ENCODE measurements at regions of chr12 and their contacts with region 1.

Region 1: GRCh38 chr12:26832822-26833742 is at the start of gene ITPR2:
- DNase-seq: peak; percentile 88 to 98
- H3K4me3 ChIP-seq: peak within 1 kb of the TSS; percentile 88 to 94
- H3K27ac ChIP-seq: peak within 1 kb of the TSS; percentile 90 to 97
- H3K4me1 ChIP-seq: peaks cover 0 to 8% of the 10 kb centered on the region in 2 donors
- H3K27me3 ChIP-seq: no peaks in the 10 kb centered on the region
- CTCF ChIP-seq: peak in 2 of 3 experiments; percentile 21 to 27
- total RNA-seq, gene ITPR2: 12.5 TPM

Region 2: DNA sequence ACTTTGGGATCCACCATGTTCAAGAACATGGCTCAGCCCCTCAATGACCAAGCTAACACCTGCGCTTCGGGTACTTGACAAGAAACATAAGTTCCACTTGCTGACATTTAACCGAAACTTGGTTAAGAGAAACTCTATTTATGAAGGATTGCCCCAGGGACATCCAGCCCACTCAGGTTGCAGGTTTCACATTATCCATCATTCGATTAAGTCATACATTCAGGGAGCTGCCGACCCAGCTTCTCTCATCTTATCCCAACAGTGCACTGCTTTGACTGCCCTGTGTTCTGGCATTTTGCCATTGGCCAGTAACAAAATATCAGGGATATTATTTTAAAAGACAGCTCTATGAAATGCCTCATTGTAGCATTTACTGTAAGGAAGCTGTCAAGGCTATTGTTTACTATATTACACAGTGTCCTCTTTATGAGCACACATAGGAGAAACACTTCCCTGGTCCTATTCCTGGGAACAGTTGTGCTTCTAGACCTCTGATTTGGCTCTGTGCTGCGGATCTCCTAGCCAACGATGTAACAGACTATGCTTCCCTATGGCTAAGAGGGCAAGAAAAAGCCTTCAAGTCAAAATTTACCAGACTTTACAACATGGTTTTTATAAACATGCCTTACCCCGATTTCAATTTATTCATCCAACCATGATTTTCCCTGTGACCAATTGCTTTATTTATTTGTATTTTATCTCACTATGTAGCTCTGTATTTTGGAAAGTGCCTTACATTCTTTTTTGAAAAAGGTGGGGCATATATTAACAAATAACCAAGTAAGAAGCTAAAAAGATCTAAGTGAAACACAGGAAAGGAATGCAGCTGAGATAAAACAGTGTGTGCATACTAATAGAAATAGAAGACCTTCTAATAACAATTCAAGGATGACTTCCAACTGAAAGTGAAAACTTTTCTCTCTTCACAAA is 109.4 kb before region 1 on chr12:
- intact Hi-C with region 1: loop called (anchors 5 kb)
- DNase-seq: no peak
- H3K4me3 ChIP-seq: no peak overlapping the region
- H3K27ac ChIP-seq: peak overlapping the region; percentile 49 to 63
- H3K4me1 ChIP-seq: peaks cover 3 to 16% of the 10 kb centered on the region in 2 donors
- H3K27me3 ChIP-seq: no peaks in the 10 kb centered on the region
- CTCF ChIP-seq: no peak

Region 3: DNA sequence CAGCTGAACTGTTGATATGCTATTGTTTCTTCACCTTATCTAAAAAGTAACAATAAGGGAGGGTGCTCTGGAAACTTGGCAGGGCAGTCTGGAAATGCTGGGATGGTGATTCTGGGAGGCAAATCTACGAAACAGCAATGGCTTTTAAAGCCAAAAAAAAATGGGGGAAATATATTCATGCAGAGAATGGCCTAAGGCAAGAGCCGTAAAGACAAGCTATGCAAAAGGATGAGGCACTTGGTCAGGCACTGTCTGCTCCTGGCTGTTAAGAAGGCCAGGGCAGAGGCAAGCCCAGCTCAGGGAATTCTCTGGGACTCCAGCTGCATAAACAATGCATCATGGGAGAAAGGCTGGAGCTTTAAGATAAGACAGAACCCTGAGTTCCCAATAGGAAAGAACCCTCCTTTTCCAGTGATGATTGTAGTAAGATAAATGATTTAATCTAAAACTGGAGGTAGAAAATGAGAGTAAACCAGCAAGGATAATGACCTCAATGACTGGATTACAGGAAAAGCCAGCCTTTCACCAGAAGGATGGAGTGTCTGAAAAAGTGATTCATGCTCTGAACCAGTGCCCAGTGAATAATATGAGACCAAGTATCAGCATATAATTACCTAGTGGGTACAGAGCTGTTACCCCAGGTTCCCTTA is 46.1 kb before region 1 on chr12:
- intact Hi-C with region 1: loop called (anchors 5 kb)
- DNase-seq: no peak
- H3K4me3 ChIP-seq: no peak overlapping the region
- H3K27ac ChIP-seq: peak overlapping the region; percentile 57 to 64
- H3K4me1 ChIP-seq: peaks cover 0 to 13% of the 10 kb centered on the region in 2 donors
- H3K27me3 ChIP-seq: no peaks in the 10 kb centered on the region
- CTCF ChIP-seq: no peak

Region 4: GRCh38 chr12:26810330-26810729 is 22.8 kb before region 1 on chr12:
- intact Hi-C with region 1: loop called (anchors 1 kb)
- DNase-seq: peak in 1 of 2 donors; percentile 88
- H3K4me3 ChIP-seq: peak overlapping the region in 1 of 2 donors; percentile 37
- H3K27ac ChIP-seq: peak overlapping the region; percentile 69 to 74
- H3K4me1 ChIP-seq: peaks cover 0 to 13% of the 10 kb centered on the region in 2 donors
- H3K27me3 ChIP-seq: no peaks in the 10 kb centered on the region
- CTCF ChIP-seq: no peak

Region 5: DNA sequence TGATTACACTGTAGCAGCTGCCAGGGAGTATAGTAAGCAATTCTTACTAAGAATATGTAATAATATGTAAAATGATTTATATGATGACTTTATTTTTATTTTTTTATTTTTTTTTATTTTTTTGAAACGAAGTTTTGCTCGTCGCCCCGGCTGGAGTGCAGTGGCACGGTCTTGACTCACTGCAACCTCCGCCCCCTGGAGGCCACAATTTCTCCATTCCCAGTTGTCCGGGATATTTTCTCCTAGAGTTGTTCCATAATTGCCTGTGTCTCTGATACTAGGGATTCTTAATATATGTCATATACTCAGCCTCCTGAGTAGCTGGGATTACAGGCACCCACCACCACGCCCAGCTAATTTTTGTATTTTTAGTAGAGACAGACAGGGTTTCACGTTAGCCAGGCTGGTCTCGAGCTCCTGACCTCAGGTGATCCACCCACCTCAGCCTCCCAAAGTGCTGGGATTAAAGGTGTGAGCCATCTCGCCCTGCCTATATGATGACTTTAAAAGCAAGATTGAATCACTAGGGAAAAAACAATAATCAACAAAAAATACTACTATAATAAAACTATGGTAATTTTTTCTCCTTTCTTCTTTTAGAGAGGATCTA is 12.1 kb after region 1 on chr12:
- intact Hi-C with region 1: loop called (anchors 1 kb)
- DNase-seq: peak in 1 of 2 donors; percentile 74
- H3K4me3 ChIP-seq: no peak overlapping the region
- H3K27ac ChIP-seq: no peak overlapping the region
- H3K4me1 ChIP-seq: peaks cover 0 to 8% of the 10 kb centered on the region in 2 donors
- H3K27me3 ChIP-seq: no peaks in the 10 kb centered on the region
- CTCF ChIP-seq: peak; percentile 20 to 62 (median 59)

Region 6: GRCh38 chr12:26884765-26885576 is 51.9 kb after region 1 on chr12:
- intact Hi-C with region 1: no loop called
- DNase-seq: peak; percentile 37 to 91
- H3K4me3 ChIP-seq: no peak overlapping the region
- H3K27ac ChIP-seq: no peak overlapping the region
- H3K4me1 ChIP-seq: no peaks in the 10 kb centered on the region
- H3K27me3 ChIP-seq: no peaks in the 10 kb centered on the region
- CTCF ChIP-seq: peak; percentile 80 to 91 (median 91)

Region 7: DNA sequence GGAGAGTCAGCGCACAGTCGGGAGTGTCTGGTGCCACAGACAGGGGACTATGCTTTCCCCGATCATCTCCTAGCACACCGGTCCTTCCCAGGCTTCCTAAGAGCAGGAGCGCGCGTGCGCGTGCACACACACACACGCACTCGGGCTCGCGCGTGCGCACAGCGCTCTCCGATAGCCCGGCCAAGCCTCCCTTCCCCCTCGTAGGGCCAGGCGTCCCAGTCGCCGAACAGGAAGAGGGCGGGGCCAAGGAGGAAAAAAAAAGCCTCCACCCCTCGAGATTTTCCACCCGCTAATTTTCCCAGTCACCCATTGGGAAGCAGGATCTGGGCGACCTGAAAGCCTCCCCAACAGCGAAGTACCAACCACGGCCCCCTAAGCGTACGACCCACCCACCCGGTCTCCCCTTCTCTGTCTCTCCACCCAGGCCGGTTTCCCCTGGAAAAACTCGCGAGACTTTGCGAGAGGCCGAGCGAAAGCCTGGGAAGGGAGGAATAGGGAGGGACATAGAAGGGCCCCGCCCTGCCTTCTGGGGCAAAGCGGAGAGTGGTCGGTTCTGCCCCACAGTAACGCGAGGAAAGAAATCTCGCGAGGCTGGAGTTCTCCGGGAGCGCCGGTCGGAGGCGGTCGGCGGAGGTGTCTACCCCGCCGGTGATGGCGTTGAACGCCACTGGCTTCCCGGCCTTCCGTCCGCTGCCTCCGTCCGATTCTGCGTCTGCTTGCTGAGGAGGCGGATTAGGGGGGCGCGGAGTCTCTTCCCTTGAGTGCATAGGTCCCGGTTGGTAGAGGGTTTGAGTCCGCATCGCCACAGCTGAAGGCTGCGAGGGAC is 105.0 kb after region 1 on chr12 and contains the starts of genes FGFR1OP2 and INTS13:
- intact Hi-C with region 1: loop called (anchors 5 kb)
- DNase-seq: peak; percentile 97 to 99
- H3K4me3 ChIP-seq: peak within 1 kb of the TSS; percentile 84 to 96
- H3K27ac ChIP-seq: peak within 1 kb of the TSS; percentile 88 to 99
- H3K4me1 ChIP-seq: peaks cover 4 to 37% of the 10 kb centered on the region in 2 donors
- H3K27me3 ChIP-seq: no peaks in the 10 kb centered on the region
- CTCF ChIP-seq: no peak
- total RNA-seq, gene FGFR1OP2: 34.3 TPM
- total RNA-seq, gene INTS13: 47.5 TPM

Region 8: DNA sequence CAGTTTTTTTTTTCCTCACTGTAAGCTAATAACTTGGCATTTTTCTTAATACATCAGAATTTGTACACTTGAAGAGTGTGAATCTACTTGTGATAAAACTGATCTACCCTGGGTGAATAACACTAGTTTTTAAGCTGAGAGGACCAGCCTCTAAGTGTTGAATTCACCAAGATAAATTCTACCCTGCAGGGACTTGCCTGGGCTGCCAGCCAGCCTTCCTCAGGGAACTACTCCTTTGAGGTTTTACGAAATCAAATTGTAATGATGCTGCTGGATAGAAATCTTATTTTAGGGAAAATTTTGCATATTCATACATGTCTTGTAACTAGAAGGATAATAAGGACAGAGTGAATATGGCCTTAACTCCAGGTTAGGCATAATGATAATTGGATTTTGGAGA is 191.2 kb after region 1 on chr12:
- intact Hi-C with region 1: loop called (anchors 5 kb)
- DNase-seq: no peak
- H3K4me3 ChIP-seq: peak overlapping the region in 1 of 2 donors; percentile 81
- H3K27ac ChIP-seq: no peak overlapping the region
- H3K4me1 ChIP-seq: peaks cover 10 to 16% of the 10 kb centered on the region in 2 donors
- H3K27me3 ChIP-seq: no peaks in the 10 kb centered on the region
- CTCF ChIP-seq: no peak